ENCODE measurements at regions of chr3 and their contacts with region 1.

Region 1: GRCh38 chr3:192435241-192435640 is 292.1 kb downstream of the FGF12 start:
- DNase-seq: no peak
- H3K4me3 ChIP-seq: no peak overlapping the region
- H3K27ac ChIP-seq: no peak overlapping the region
- H3K4me1 ChIP-seq: no peaks in the 10 kb centered on the region
- H3K27me3 ChIP-seq: no peaks in the 10 kb centered on the region
- CTCF ChIP-seq: no peak
- EP300 ChIP-seq: no peak
- POLR2A ChIP-seq: no peak

Region 2: GRCh38 chr3:191430103-191430502 is 1005.1 kb before region 1 on chr3:
- in situ Hi-C with region 1: no loop called
- intact Hi-C with region 1: loop called (anchors 5 kb)
- DNase-seq: no peak
- H3K4me3 ChIP-seq: no peak overlapping the region
- H3K27ac ChIP-seq: no peak overlapping the region
- H3K4me1 ChIP-seq: no peaks in the 10 kb centered on the region
- H3K27me3 ChIP-seq: no peaks in the 10 kb centered on the region
- CTCF ChIP-seq: no peak
- EP300 ChIP-seq: no peak
- POLR2A ChIP-seq: no peak

Measured in transverse colon (tissue), 4 donors.